AG04449 (cell line): ENCODE measurements at regions of chr19 and their contacts with region 1.

Region 1: GRCh38 chr19:35044317-35045117 is 3.0 kb downstream of the HPN start:
- DNase-seq: no peak
- H3K4me3 ChIP-seq: no peak overlapping the region
- CTCF ChIP-seq: peak; percentile 84

Region 2: DNA sequence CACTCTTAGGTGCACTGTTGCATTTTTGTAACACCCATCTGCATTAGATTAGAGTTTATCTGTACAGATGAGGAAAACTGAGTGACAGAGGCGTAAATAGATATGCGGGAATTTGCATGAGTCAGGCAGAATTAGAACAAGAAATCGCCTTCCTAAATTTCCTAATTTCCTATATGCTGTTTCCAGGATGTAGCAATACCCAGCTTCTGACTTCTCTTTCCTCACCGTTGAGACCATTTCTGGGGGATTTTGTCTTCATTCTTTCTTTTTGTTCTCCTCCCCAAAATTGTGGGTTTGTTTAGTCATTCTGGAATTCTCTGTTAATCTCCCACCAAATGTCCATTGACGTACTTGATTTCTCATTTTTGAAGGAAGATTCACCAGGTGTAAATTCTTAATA is 69.9 kb before region 1 on chr19:
- CTCF ChIA-PET with region 1: interaction called, 16 read pairs
- POLR2A ChIA-PET with region 1: no interaction called
- DNase-seq: no peak
- H3K4me3 ChIP-seq: no peak overlapping the region
- CTCF ChIP-seq: no peak

Region 3: DNA sequence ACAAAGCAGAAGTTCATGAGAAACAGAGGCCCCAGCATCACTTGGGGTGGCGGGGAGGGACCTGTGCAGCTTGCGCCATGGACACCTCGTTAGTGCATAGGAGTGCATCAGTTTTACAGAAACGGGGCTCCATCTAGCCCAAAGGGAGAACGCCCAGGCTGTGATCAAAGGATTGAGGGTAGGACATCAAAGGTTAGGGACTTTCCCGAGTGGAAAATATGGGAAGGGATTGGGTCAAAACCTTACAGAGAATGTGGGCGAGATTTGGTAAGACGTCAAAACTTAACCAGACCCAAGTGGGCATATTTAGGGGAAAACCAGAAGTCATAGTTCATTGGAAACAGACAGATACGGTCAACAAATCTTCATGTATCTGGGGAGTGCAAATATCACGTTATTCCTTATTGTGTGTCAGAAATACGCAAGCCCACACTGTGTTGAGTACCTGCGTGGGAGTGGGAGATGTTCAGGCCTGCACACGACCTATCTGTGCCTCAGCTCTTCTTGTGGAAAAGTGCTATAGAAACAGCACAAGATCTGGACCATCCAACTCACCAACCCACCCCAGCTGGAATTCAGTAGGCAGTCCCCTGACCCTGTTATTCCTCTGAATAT is 53.8 kb before region 1 on chr19:
- CTCF ChIA-PET with region 1: no interaction called
- POLR2A ChIA-PET with region 1: no interaction called
- DNase-seq: no peak
- H3K4me3 ChIP-seq: no peak overlapping the region
- CTCF ChIP-seq: no peak

Region 4: DNA sequence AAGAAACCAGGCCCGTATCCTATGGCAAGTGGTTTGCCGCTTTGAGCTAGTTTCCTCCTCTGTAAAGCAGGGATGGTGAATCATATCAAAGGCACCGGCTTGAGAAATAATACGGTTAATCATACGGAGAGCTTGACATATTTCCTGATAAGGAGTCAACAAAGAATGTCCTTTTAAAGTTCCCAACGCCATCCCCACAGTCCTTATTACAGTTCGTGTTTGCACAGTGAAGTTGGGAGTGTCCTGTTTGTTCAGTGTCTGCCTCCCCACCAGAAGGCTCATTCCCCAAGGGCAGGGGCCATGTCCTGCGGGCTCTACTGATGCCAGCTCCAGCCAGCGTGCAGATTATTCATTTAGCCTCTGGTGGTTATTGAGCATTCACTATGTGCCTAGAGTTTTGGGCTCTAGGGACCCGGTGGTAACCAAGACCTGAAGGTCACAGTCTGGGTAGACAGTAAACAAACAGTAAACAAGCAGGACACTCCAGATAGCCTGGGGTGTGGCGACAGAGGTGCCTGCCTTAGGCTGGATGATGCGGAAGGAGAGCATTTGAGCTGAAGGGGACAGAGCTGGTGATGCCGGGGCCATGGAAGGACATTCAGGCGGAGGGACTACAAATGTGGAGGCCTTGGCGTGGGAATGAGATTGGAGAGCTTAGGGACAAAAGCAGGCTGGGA is 38.0 kb before region 1 on chr19:
- CTCF ChIA-PET with region 1: interaction called, 17 read pairs
- POLR2A ChIA-PET with region 1: no interaction called
- DNase-seq: no peak
- H3K4me3 ChIP-seq: no peak overlapping the region
- CTCF ChIP-seq: no peak

Region 5: GRCh38 chr19:35027851-35028599 is 16.5 kb before region 1 on chr19:
- CTCF ChIA-PET with region 1: interaction called, 23 read pairs
- POLR2A ChIA-PET with region 1: interaction called, 7 read pairs
- DNase-seq: no peak
- H3K4me3 ChIP-seq: no peak overlapping the region
- CTCF ChIP-seq: no peak

Region 6: GRCh38 chr19:35066691-35067563 is 22.4 kb after region 1 on chr19:
- CTCF ChIA-PET with region 1: interaction called, 44 read pairs
- POLR2A ChIA-PET with region 1: no interaction called
- DNase-seq: no peak
- H3K4me3 ChIP-seq: no peak overlapping the region
- CTCF ChIP-seq: peak; percentile 93

Region 7: DNA sequence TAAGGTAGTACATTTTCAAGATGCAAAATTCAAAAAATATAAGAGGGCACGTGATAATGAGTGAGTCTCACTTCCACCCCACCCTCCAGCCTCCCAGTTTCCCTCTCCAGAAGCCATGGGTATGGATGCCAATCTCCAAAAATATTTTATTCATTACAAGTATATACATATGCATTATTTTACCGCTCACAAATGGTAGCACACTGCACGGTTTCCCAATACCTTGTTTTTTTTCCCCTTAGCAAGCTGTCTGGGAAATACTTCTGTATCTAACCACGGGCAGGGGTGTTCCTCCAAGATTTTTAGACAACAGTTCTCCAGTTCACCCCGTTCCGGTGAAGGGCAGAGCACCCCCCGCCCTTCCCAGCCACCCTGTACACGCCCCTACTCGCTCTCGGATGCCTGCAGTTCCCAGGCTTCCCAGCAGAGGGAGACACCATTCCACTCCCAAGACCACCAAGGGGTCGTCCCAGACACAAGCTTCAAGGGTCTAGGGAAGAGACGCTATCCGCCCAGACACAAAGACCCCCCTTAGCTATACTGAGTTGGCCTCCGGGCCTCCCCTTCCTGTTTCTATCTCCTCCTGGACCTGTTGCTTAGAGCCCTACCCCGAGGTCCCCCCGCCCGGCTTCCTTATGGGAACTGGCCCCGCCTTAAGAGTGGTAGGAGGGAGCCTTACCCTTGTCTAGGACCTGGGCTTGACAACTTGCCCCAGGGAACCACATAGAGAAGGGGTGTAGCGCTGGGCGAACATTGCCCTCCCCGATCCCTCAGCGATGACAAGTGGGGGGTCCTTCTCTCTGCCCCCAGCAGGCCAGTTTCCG is 70.0 kb after region 1 on chr19:
- CTCF ChIA-PET with region 1: interaction called, 12 read pairs
- POLR2A ChIA-PET with region 1: no interaction called
- DNase-seq: no peak
- H3K4me3 ChIP-seq: peak overlapping the region; percentile 6; the same call in 1 of the 2 replicates
- CTCF ChIP-seq: peak; percentile 96

Region 8: DNA sequence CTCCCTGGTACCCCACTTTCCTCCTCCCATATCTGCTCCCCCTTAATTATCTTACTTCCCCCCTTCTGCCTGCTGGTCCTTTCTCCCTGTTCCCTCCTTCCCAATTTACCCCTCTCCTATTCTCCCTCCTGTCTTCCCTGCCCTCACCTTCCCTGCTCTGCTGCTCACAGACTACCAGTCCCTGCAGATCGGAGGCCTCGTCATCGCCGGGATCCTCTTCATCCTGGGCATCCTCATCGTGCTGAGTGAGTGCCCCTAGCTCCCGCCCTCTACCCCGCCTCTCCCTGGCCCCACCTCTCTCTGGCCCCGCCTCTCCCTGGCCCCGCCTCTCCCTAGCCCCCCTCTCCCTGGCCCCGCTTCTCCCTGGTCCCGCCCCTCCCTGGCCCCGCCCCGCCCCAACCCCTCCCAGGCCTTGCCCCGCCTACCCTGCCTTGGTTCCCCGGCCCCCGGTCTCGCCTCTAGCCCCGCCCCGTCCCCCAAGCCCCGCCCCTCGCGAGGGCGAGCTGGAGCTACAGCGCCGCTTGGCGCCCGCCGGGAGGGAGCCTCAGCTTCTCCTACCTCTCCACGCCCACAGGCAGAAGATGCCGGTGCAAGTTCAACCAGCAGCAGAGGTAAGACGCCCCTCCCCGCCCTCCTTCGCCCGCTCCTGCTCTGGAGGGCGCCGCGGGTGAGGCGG is 96.6 kb after region 1 on chr19:
- CTCF ChIA-PET with region 1: interaction called, 67 read pairs
- POLR2A ChIA-PET with region 1: no interaction called
- DNase-seq: peak; percentile 14
- H3K4me3 ChIP-seq: peak overlapping the region; percentile 12; the same call in 1 of the 2 replicates
- CTCF ChIP-seq: peak; percentile 73

Region 9: GRCh38 chr19:35161434-35161743 is 116.9 kb after region 1 on chr19:
- CTCF ChIA-PET with region 1: no interaction called
- POLR2A ChIA-PET with region 1: no interaction called
- DNase-seq: no peak
- H3K4me3 ChIP-seq: no peak overlapping the region
- CTCF ChIP-seq: no peak